ENCODE measurements at regions of chr7 and their contacts with region 1.

Region 1: GRCh38 chr7:12490117-12490688 is 80.3 kb upstream of the SCIN start:
- DNase-seq: no peak
- ATAC-seq: peak; percentile 44
- H3K4me3 Mint-ChIP-seq: no peak overlapping the region
- H3K27ac Mint-ChIP-seq: no peak overlapping the region
- H3K4me1 Mint-ChIP-seq: no peaks in the 10 kb centered on the region
- H3K27me3 Mint-ChIP-seq: peaks cover 2% of the 10 kb centered on the region

Region 2: DNA sequence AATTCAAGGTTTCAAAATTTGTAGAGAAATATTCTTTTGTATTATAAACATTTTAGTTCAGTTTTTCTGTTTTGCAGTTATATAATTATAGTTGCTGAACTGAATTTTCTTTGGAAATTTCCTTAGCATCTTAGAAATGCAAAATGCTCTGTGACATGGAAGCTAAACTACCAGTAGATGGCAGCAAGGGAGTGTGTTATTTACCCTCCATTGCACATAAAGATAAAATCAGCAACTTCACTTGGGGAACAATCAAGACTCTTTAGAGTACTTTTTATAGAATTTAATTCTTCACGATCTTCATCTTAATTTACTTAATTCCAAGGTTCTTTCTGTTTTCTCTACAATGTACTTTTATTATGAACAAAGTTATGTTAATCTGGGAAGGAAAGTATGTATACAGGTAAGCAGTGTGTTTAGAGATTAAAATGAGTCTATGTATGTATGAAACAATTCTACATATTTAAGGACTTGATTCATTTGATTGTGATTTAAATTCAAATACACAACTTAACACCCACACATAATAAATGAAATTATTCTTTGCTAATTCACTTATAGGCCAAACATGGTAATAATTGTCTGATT is 1062.4 kb before region 1 on chr7:
- CTCF ChIA-PET with region 1: no interaction called
- POLR2A ChIA-PET with region 1: no interaction called
- intact Hi-C with region 1: loop called (anchors 5 kb)
- DNase-seq: no peak
- ATAC-seq: no peak
- H3K4me3 Mint-ChIP-seq: no peak overlapping the region
- H3K27ac Mint-ChIP-seq: no peak overlapping the region
- H3K4me1 Mint-ChIP-seq: no peaks in the 10 kb centered on the region
- H3K27me3 Mint-ChIP-seq: no peaks in the 10 kb centered on the region

Region 3: DNA sequence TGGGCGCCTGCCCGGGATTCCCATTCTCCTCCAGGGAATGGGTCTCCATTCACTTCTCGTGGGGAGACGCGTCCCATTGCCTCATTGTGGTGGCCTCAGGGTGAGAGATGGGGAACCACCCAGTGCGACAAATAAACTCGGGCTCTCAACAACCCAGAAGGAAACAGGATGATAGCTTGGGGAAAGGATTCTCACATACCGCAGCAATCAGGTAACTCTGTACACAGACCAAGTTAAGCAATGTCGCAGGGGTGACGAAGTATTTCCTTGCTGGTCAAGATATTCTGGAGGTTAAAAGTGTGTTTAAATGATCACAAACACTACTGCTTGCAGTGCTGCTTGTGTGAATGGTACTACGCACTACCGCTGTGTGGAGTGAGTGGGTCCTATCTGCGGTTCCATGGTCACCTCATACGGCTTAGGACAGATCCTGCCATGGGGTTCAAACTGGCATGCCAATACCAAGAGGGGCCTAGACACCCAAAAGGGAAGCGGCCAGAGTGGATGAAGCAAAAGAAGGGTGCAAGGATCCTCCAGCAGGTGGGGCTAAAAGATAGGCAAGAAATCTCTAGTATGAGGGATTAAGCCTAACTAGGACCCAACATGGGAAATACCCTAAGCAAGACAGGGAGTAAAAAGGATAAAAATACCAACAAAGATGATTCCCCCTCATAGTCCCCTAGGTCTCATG is 422.9 kb before region 1 on chr7:
- CTCF ChIA-PET with region 1: interaction called, 3 read pairs
- POLR2A ChIA-PET with region 1: no interaction called
- intact Hi-C with region 1: loop called (anchors 1 to 2 kb)
- DNase-seq: peak; percentile 68
- ATAC-seq: peak; percentile 27
- H3K4me3 Mint-ChIP-seq: no peak overlapping the region
- H3K27ac Mint-ChIP-seq: no peak overlapping the region
- H3K4me1 Mint-ChIP-seq: peaks cover 19% of the 10 kb centered on the region
- H3K27me3 Mint-ChIP-seq: no peaks in the 10 kb centered on the region

Region 4: GRCh38 chr7:12434009-12434642 is 56.1 kb before region 1 on chr7:
- CTCF ChIA-PET with region 1: interaction called, 9 read pairs
- POLR2A ChIA-PET with region 1: no interaction called
- intact Hi-C with region 1: loop called in 1 of 2 experiments (anchors 2 kb)
- DNase-seq: no peak
- ATAC-seq: no peak
- H3K4me3 Mint-ChIP-seq: no peak overlapping the region
- H3K27ac Mint-ChIP-seq: no peak overlapping the region
- H3K4me1 Mint-ChIP-seq: no peaks in the 10 kb centered on the region
- H3K27me3 Mint-ChIP-seq: peaks cover 14% of the 10 kb centered on the region

Region 5: GRCh38 chr7:12467828-12468227 is 22.4 kb before region 1 on chr7:
- CTCF ChIA-PET with region 1: interaction called, 10 read pairs
- POLR2A ChIA-PET with region 1: no interaction called
- intact Hi-C with region 1: no loop called
- DNase-seq: no peak
- ATAC-seq: no peak
- H3K4me3 Mint-ChIP-seq: no peak overlapping the region
- H3K27ac Mint-ChIP-seq: no peak overlapping the region
- H3K4me1 Mint-ChIP-seq: no peaks in the 10 kb centered on the region
- H3K27me3 Mint-ChIP-seq: no peaks in the 10 kb centered on the region

Region 6: GRCh38 chr7:13476881-13477444 is 986.8 kb after region 1 on chr7:
- CTCF ChIA-PET with region 1: no interaction called
- POLR2A ChIA-PET with region 1: no interaction called
- intact Hi-C with region 1: no loop called
- DNase-seq: no peak
- ATAC-seq: no peak
- H3K4me3 Mint-ChIP-seq: no peak overlapping the region
- H3K27ac Mint-ChIP-seq: no peak overlapping the region
- H3K4me1 Mint-ChIP-seq: no peaks in the 10 kb centered on the region
- H3K27me3 Mint-ChIP-seq: no peaks in the 10 kb centered on the region